Calu3 (cell line): ENCODE measurements at regions of chrX and their contacts with region 1.

Region 1: DNA sequence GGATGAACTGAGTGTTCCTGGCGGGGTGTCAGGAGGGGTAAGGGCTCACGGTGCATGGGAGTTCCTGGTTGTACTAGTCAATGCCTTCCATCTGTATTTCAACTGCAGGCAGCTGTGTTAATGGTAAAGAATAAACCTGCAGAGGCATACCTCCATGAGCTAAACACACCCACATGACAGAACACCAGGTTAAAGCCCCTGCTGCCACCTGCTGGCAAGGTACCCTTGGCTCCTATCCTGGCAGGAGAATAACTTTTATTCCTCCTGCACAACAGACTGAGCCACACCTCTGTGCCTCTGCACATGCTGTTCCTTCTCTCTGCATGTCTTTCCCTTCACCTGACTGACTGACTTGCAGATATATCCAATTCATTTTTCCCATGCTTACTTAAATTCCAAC is 11.1 kb downstream of the ITIH6 start:
- DNase-seq: peak; percentile 53
- H3K4me3 Mint-ChIP-seq: no peak overlapping the region
- H3K27ac Mint-ChIP-seq: no peak overlapping the region
- H3K4me1 Mint-ChIP-seq: no peaks in the 10 kb centered on the region
- H3K27me3 Mint-ChIP-seq: peaks cover 7% of the 10 kb centered on the region
- CTCF ChIP-seq: peak; percentile 41

Region 2: DNA sequence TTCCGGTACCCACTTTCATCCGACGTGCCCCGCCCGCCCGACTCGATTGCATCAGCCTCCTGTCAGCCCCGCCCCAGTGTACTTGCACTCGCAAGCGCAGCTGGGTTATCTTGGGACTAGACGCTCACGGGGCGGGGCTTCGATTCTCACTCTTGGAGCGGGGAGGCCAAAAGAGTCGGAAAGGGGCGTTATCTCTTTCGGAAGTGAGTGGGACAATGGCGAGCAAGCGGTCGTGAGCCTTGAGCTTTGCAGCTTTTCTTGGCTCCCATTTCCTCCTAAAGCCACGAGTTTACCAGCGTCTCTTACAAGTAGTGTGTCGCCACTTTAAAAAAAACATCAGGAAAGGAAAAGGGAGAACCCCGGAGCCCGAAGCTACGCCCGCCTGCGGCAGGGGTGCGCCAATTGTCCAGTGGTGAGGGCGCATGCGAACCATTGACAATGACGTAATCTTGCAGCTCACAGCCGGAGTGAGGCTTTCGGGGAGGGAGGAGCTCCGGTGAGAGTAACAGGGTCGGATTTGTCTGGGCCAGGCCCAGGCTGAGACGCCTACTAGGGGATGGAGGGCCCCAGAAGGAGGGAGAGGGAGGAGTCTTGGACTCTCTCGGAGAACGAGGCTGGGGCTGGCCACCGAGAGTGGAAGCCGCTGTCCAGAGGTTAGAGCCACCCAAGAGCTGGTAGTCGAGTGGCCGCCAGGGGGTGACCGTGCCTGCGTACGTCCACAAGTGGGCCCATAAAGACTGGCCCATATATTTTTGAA is 147.4 kb before region 1 on chrX:
- CTCF ChIA-PET with region 1: interaction called, 27 read pairs
- intact Hi-C with region 1: loop called (anchors 1 kb)
- DNase-seq: peak; percentile 91
- H3K4me3 Mint-ChIP-seq: peak overlapping the region; percentile 74
- H3K27ac Mint-ChIP-seq: peak overlapping the region; percentile 89
- H3K4me1 Mint-ChIP-seq: peaks cover 24% of the 10 kb centered on the region
- H3K27me3 Mint-ChIP-seq: no peaks in the 10 kb centered on the region
- CTCF ChIP-seq: peak; percentile 53